Psoas muscle (tissue), 8 donors: ENCODE measurements at regions of chr6 and their contacts with region 1.

Region 1: GRCh38 chr6:10875026-10875425 is 6.8 kb downstream of the GCM2 start:
- DNase-seq: no peak
- ATAC-seq: no peak
- H3K4me3 ChIP-seq: no peak overlapping the region
- H3K27ac ChIP-seq: no peak overlapping the region
- H3K4me1 ChIP-seq: no peaks in the 10 kb centered on the region
- H3K27me3 ChIP-seq: peaks cover 0 to under 1% (median 0%) of the 10 kb centered on the region in 3 donors
- CTCF ChIP-seq: no peak

Region 2: DNA sequence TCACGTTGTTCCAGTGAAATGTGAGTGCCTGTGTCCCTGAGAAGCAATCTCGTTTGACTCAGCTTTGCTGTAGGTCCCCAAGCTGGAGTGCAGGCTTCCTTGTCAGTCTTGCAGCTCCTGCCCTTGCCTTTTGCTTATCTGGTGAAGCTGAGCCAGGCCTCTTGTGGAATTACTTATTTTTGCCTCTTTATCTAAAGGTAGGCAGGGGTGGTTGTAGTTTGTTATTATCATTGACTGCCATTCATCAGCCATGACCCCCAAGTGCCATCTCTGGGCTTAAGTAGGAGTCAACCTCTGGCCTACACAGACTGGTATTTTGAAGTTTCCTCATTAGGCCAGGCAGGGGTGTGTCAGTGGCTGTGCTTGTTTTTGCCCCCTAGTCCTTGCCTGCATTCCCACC is 125.3 kb before region 1 on chr6:
- intact Hi-C with region 1: no loop called
- DNase-seq: no peak
- ATAC-seq: no peak
- H3K4me3 ChIP-seq: no peak overlapping the region
- H3K27ac ChIP-seq: no peak overlapping the region
- H3K4me1 ChIP-seq: peaks cover 22% of the 10 kb centered on the region
- H3K27me3 ChIP-seq: no peaks in the 10 kb centered on the region
- CTCF ChIP-seq: no peak

Region 3: GRCh38 chr6:10891770-10892359 is 16.8 kb after region 1 on chr6:
- intact Hi-C with region 1: loop called in 1 of 2 experiments (anchors 1 kb)
- DNase-seq: no peak
- ATAC-seq: no peak
- H3K4me3 ChIP-seq: no peak overlapping the region
- H3K27ac ChIP-seq: no peak overlapping the region
- H3K4me1 ChIP-seq: no peaks in the 10 kb centered on the region
- H3K27me3 ChIP-seq: peaks cover 0 to 19% (median 7%) of the 10 kb centered on the region in 3 donors
- CTCF ChIP-seq: no peak